ENCODE measurements at regions of chr14 and their contacts with region 1.

Region 1: GRCh38 chr14:37874429-37875191 is 279.2 kb downstream of the TTC6 start:
- DNase-seq: peak; percentile 84
- H3K4me3 ChIP-seq: no peak overlapping the region
- H3K27ac ChIP-seq: no peak overlapping the region
- H3K4me1 ChIP-seq: peaks cover 0 to 25% (median 4%) of the 10 kb centered on the region in 4 donors
- H3K27me3 ChIP-seq: no peaks in the 10 kb centered on the region
- CTCF ChIP-seq: peak; percentile 62 to 83 (median 82)
- EP300 ChIP-seq: no peak
- POLR2A ChIP-seq: no peak

Region 2: GRCh38 chr14:37246427-37246914 is 628.1 kb before region 1 on chr14:
- intact Hi-C with region 1: loop called (anchors 5 kb)
- DNase-seq: no peak
- H3K4me3 ChIP-seq: no peak overlapping the region
- H3K27ac ChIP-seq: no peak overlapping the region
- H3K4me1 ChIP-seq: no peaks in the 10 kb centered on the region
- H3K27me3 ChIP-seq: no peaks in the 10 kb centered on the region
- CTCF ChIP-seq: peak; percentile 9 to 77 (median 53)
- EP300 ChIP-seq: no peak
- POLR2A ChIP-seq: no peak

Region 3: GRCh38 chr14:37583359-37584231 is 291.0 kb before region 1 on chr14:
- intact Hi-C with region 1: loop called (anchors 10 kb)
- DNase-seq: no peak
- H3K4me3 ChIP-seq: peak overlapping the region in 1 of 4 donors; percentile 8
- H3K27ac ChIP-seq: no peak overlapping the region
- H3K4me1 ChIP-seq: peaks cover 0 to 28% (median 26%) of the 10 kb centered on the region in 4 donors
- H3K27me3 ChIP-seq: peaks cover 42 to 88% (median 64%) of the 10 kb centered on the region in 3 donors
- CTCF ChIP-seq: no peak
- EP300 ChIP-seq: no peak
- POLR2A ChIP-seq: no peak

Region 4: DNA sequence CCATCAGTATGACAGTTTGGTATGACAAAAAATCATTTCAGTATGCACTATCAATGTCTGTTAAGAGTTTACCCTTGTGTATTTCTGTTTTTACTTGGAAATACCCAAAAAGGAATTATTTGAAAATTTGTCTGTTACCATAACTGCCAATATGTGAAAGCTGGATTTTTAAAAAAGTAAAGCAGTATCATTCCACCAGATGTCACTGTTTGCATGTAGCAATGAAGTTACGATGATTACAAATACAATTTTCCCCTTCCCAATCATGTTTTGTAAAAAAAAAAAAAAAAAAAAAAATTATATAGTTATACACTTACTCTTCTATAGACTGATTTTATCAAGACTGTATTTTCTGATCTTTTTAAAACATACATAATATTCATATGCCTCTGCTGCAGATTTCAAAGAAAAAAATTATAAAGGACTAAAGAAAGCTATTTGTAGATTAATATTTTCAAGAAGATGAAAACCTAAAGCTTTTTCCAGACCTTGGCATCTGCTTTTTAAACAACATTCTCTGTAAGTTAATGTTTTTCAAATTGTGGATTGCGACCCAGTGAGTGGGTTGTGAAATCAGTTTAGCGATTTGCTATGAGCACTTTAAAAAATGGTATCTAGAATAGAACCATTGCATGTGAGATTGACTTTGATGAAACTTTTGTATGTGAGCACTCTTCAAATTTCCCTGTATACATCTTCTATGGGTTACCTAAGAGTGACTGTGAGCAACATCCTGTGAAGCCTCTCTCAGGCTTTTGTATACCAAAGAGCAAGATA is 165.0 kb before region 1 on chr14:
- intact Hi-C with region 1: loop called (anchors 1 kb)
- DNase-seq: no peak
- H3K4me3 ChIP-seq: no peak overlapping the region
- H3K27ac ChIP-seq: no peak overlapping the region
- H3K4me1 ChIP-seq: no peaks in the 10 kb centered on the region
- H3K27me3 ChIP-seq: no peaks in the 10 kb centered on the region
- CTCF ChIP-seq: peak in 2 of 4 experiments; percentile 19 to 41
- EP300 ChIP-seq: no peak
- POLR2A ChIP-seq: no peak